ENCODE measurements at regions of chr3 and their contacts with region 1.

Region 1: DNA sequence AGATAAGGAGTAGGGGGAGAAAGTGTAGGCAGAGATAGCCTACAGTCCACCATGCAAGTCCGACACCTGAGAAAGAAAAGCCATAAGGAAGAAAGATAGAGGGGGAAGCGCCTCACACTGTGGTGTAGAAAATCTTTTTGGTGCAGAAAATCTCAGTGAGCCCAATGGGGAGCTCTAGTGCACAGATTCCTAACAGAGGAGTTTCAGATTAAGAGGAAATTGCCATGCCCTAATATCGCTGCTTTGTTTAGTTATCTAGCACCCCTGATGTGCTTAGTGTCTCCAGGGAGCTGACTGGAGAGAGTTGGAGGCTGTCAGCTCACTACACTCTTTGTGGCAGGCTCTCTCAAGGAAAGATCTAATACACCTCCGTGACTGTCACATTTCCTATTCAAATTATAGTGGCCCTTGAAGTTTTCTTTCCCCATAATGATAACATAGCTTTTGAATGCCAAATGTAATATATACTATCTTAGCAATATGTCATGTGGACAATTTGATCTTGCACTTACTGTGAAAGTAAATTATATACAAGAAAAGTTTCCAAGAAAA is 33.7 kb downstream of the CGGBP1 start:
- DNase-seq: no peak
- H3K4me3 Mint-ChIP-seq: no peak overlapping the region
- H3K27ac Mint-ChIP-seq: no peak overlapping the region
- H3K4me1 Mint-ChIP-seq: peaks cover 18% of the 10 kb centered on the region
- H3K27me3 Mint-ChIP-seq: peaks cover 13% of the 10 kb centered on the region

Region 2: DNA sequence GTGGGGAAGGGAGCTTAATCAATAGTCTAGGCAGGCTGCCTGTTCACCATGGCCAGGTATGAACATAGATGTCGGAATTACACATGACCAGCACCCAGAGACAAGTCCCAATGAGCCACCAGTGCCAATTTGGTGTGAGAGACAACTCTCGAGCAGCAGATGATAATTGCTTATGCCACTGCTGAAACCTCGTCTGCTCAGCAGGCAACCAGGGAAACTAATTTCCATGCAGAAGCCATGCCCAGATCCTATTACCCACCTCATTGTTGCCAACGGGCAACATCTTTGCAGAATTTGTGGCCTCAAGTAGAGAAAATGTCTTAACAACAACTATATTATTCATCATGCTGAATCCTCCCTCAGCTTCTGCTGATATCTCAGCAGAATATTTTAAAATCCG is 51.2 kb before region 1 on chr3:
- intact Hi-C with region 1: loop called (anchors 2 kb)
- DNase-seq: no peak
- H3K4me3 Mint-ChIP-seq: no peak overlapping the region
- H3K27ac Mint-ChIP-seq: no peak overlapping the region
- H3K4me1 Mint-ChIP-seq: no peaks in the 10 kb centered on the region
- H3K27me3 Mint-ChIP-seq: peaks cover 7% of the 10 kb centered on the region

Region 3: DNA sequence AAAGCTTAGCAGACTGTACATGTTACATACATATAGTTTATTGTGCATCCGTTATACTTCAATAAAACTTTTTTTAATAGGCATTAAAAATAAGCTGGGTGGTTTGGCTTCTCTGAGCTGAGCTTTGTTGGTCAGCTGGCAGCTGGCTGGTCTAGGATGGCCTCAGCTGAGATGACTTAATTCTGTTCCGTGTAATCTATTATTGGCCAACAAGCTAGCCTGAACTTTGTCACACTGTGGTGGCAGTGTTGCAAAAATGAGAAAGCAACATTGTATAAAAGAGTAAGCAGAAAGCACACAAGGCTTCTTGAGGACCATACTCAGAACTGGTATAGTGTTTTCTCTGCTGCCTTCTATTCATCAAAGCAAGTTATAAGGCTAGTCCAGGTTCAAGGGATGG is 11.5 kb before region 1 on chr3:
- intact Hi-C with region 1: no loop called
- DNase-seq: no peak
- H3K4me3 Mint-ChIP-seq: no peak overlapping the region
- H3K27ac Mint-ChIP-seq: no peak overlapping the region
- H3K4me1 Mint-ChIP-seq: peaks cover 14% of the 10 kb centered on the region
- H3K27me3 Mint-ChIP-seq: peaks cover 17% of the 10 kb centered on the region